Prostate gland (tissue), 2 donors: ENCODE measurements at regions of chr7 and their contacts with region 1.

Region 1: GRCh38 chr7:114026486-114027089 is 107.8 kb upstream of the PPP1R3A start:
- DNase-seq: peak; percentile 25
- H3K4me3 ChIP-seq: no peak overlapping the region
- H3K27ac ChIP-seq: no peak overlapping the region
- H3K4me1 ChIP-seq: no peaks in the 10 kb centered on the region
- H3K27me3 ChIP-seq: no peaks in the 10 kb centered on the region
- CTCF ChIP-seq: peak; percentile 38 to 61 (median 58)
- POLR2A ChIP-seq: no peak

Region 2: DNA sequence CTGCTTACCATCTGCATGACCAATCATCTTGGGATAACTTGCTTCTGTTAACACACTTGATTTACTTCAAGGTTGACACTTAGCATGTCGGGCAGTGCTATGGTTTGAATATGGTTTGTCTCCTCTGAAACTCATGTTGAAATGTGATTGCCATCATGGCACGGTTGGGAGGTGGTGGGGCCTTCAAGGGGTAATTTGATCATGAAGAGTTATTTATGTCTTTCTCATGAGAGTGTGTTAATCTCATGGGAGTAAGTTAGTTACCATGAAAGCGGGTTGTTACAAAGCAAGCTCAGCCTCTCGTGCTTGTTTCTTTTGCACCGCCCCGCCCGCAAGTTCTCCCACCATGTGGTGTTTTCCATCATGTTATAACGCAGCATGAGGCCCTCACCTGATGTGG is 1984.0 kb before region 1 on chr7:
- intact Hi-C with region 1: no loop called
- DNase-seq: no peak
- H3K4me3 ChIP-seq: no peak overlapping the region
- H3K27ac ChIP-seq: no peak overlapping the region
- H3K4me1 ChIP-seq: no peaks in the 10 kb centered on the region
- H3K27me3 ChIP-seq: no peaks in the 10 kb centered on the region
- CTCF ChIP-seq: no peak
- POLR2A ChIP-seq: no peak

Region 3: DNA sequence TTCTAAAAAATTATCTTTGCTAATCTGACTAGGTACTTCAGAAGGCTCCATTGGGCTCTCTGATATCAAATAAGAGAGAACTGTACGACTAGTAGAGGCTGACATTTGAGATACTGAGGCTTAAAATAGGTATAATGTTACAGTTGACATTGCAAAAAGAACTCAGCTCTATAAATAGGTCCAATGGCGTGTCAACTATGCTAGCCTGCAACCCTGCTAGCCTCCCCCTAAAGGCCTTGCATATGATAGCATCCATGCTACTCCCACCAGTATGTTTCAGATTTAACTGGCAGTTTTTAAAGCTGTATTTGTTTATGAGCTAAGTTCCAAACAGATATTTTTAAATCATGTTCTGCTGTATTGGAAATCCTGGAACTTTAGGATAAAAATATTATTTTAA is 107.6 kb before region 1 on chr7 and contains the start of gene PPP1R3A:
- intact Hi-C with region 1: no loop called
- DNase-seq: no peak
- H3K4me3 ChIP-seq: no peak within 1 kb of the TSS
- H3K27ac ChIP-seq: no peak within 1 kb of the TSS
- H3K4me1 ChIP-seq: no peaks in the 10 kb centered on the region
- H3K27me3 ChIP-seq: no peaks in the 10 kb centered on the region
- CTCF ChIP-seq: no peak
- POLR2A ChIP-seq: no peak
- total RNA-seq, gene PPP1R3A: 0.11 to 0.18 TPM

Region 4: DNA sequence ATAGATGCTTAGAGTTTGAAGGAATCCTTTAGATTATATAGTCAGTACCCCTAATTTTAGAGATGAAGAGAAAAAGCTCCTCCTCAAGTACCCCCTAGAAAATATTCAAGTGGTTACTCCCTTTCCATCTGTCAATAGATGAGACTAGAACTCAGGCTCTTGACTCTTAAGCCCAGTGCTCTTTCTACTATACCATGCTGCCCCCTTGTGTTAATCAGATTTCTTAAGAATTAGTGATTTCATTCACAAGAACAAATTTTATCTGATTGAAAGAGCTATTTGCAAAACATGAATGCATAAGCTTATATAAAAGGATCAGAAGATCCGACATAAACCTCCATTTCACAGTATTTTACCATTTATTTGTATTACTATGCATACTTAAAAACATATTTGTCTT is 1824.7 kb after region 1 on chr7:
- intact Hi-C with region 1: loop called (anchors 5 kb)
- DNase-seq: no peak
- H3K4me3 ChIP-seq: no peak overlapping the region
- H3K27ac ChIP-seq: no peak overlapping the region
- H3K4me1 ChIP-seq: no peaks in the 10 kb centered on the region
- H3K27me3 ChIP-seq: no peaks in the 10 kb centered on the region
- CTCF ChIP-seq: peak in 2 of 4 experiments; percentile 19 to 31
- POLR2A ChIP-seq: no peak